Common myeloid progenitor, CD34-positive (primary cell): ENCODE measurements at regions of chr4 and their contacts with region 1.

Region 1: DNA sequence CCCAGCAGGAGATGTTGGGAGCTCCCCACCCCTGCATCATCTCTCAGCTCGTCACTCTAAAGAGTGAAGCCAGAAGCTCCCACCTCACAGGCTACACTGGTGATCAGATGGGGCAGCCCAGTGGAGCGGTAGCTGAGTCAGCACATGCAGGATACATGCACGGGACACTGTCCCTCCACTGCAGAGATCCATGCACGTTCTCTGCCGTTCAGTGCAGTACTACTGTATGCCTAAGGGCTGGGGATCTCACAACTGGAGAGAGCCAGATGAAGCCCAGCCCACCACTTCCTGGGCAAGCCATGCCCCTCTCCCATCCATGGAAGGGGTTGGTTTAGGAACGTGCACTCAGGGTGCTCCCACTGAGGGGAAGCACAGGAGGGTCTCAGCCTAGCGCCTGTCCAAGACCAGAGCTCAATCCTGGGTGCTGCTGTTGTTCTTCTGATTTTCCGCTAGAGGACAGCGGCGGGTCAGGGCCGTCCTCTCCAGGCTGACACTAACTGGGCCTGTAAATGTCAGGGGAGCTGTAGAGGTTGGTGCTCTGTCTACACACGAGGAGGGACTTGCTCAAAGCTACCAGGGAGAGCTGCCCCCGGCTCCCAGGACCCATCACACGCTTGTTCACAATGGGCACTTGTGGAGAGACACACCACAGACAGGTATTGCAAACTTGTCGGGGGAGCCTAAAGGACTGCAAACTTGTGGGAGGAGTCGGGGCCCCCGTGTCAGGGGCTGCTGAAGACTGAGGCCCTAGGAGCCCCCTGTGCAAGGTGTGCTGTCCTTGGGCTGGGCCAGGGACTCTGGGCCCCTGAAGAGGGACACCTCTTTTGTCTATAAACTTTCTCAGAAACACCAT is 18.2 kb upstream of the ABLIM2 start:
- DNase-seq: peak; percentile 59 to 79 (median 75)
- H3K4me3 ChIP-seq: no peak overlapping the region
- H3K27ac ChIP-seq: no peak overlapping the region
- H3K4me1 ChIP-seq: peaks cover 0 to 26% (median 8%) of the 10 kb centered on the region in 4 experiments
- H3K27me3 ChIP-seq: no peaks in the 10 kb centered on the region

Region 2: DNA sequence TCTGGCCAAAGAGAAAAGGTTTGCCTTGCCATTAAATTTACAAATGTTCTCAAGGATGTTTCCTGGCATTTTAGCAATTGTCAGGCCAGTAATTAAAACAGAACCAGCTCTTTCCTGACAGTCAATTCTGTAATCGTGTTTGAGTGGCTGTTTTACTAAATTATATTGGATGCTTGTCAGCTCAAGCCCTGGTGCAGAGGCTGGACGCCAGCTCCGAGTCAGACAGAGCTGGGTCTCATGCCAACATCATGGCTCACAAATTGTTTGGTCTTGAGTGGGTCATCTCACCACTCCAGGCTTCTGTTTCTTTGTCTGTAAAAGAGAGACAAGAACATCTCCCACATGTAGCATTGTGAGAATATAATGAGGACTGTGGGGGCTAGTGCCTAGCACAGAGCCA is 551.7 kb before region 1 on chr4:
- CTCF ChIA-PET with region 1: no interaction called
- POLR2A ChIA-PET with region 1: no interaction called
- DNase-seq: no peak
- H3K4me3 ChIP-seq: no peak overlapping the region
- H3K27ac ChIP-seq: no peak overlapping the region
- H3K4me1 ChIP-seq: peaks cover 0 to 14% (median 8%) of the 10 kb centered on the region in 4 experiments
- H3K27me3 ChIP-seq: peaks cover 0 to 48% (median 6%) of the 10 kb centered on the region in 5 experiments

Region 3: GRCh38 chr4:7973545-7973981 is 203.2 kb before region 1 on chr4:
- CTCF ChIA-PET with region 1: no interaction called
- POLR2A ChIA-PET with region 1: no interaction called
- DNase-seq: no peak
- H3K4me3 ChIP-seq: no peak overlapping the region
- H3K27ac ChIP-seq: no peak overlapping the region
- H3K4me1 ChIP-seq: peaks cover 0 to 25% (median 15%) of the 10 kb centered on the region in 4 experiments
- H3K27me3 ChIP-seq: peaks cover 0 to 38% (median 7%) of the 10 kb centered on the region in 5 experiments

Region 4: GRCh38 chr4:8158710-8159536 is 17.9 kb before region 1 on chr4 and contains the start of gene ABLIM2:
- CTCF ChIA-PET with region 1: interaction called, 10 read pairs
- POLR2A ChIA-PET with region 1: no interaction called
- DNase-seq: peak; percentile 98 to 99 (median 99)
- H3K4me3 ChIP-seq: peak within 1 kb of the TSS; percentile 47 to 81 (median 72)
- H3K27ac ChIP-seq: no peak within 1 kb of the TSS
- H3K4me1 ChIP-seq: peaks cover 0 to 18% (median 16%) of the 10 kb centered on the region in 4 experiments
- H3K27me3 ChIP-seq: peaks cover 0 to 49% (median 27%) of the 10 kb centered on the region in 5 experiments

Region 5: GRCh38 chr4:8198906-8199593 is 22.3 kb after region 1 on chr4 and contains the start of gene SH3TC1:
- CTCF ChIA-PET with region 1: interaction called, 116 read pairs
- POLR2A ChIA-PET with region 1: interaction called, 4 read pairs
- DNase-seq: peak; percentile 83 to 95 (median 93)
- H3K4me3 ChIP-seq: peak within 1 kb of the TSS; percentile 42 to 88 (median 80)
- H3K27ac ChIP-seq: peak within 1 kb of the TSS; percentile 46 to 81
- H3K4me1 ChIP-seq: peaks cover 4 to 89% (median 73%) of the 10 kb centered on the region in 4 experiments
- H3K27me3 ChIP-seq: no peaks in the 10 kb centered on the region

Region 6: GRCh38 chr4:8236106-8236919 is 59.5 kb after region 1 on chr4:
- CTCF ChIA-PET with region 1: interaction called, 17 read pairs
- POLR2A ChIA-PET with region 1: no interaction called
- DNase-seq: no peak
- H3K4me3 ChIP-seq: no peak overlapping the region
- H3K27ac ChIP-seq: no peak overlapping the region
- H3K4me1 ChIP-seq: peaks cover 0 to 25% (median 10%) of the 10 kb centered on the region in 4 experiments
- H3K27me3 ChIP-seq: no peaks in the 10 kb centered on the region

Region 7: DNA sequence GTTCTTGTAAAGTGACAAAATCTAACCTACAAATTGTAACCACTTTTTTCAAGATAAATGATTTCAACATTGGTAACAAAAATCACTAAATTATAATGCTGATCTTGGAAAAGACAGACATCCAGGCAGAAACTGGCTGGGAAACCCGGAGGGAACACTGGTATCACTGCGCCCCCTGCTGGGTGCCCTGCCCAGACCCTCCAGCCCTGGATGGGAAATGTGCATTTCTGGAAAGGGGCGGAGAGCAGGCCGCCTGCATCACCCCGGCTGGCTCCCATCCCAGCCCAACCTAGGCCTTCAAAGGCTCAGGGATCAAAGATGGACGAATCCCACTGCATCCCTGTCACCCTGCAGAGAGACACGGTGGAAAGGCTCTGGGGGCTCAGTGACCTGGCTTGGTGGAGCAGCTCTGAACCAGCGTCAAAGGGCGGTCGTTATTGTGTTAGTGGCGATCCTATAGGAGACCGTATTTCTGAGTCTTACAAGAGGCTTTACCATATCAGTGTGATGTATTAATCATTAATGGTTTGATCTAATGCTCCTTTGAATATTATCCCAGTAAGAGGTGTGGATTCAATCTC is 226.5 kb after region 1 on chr4:
- CTCF ChIA-PET with region 1: interaction called, 31 read pairs
- POLR2A ChIA-PET with region 1: no interaction called
- DNase-seq: peak; percentile 61 to 68 (median 61)
- H3K4me3 ChIP-seq: peak overlapping the region in 1 of 7 experiments; percentile 13
- H3K27ac ChIP-seq: no peak overlapping the region
- H3K4me1 ChIP-seq: peaks cover 4 to 45% (median 33%) of the 10 kb centered on the region in 4 experiments
- H3K27me3 ChIP-seq: no peaks in the 10 kb centered on the region